Prostate gland (tissue), 2 donors: ENCODE measurements at regions of chr6 and their contacts with region 1.

Region 1: GRCh38 chr6:134021396-134022122 is 30.9 kb downstream of the SLC2A12 start:
- DNase-seq: no peak
- H3K4me3 ChIP-seq: no peak overlapping the region
- H3K27ac ChIP-seq: peak overlapping the region; percentile 77 to 78
- H3K4me1 ChIP-seq: peaks cover 11% of the 10 kb centered on the region
- H3K27me3 ChIP-seq: no peaks in the 10 kb centered on the region
- CTCF ChIP-seq: no peak
- POLR2A ChIP-seq: no peak

Region 2: GRCh38 chr6:133806382-133807140 is 215.0 kb before region 1 on chr6:
- intact Hi-C with region 1: no loop called
- DNase-seq: no peak
- H3K4me3 ChIP-seq: no peak overlapping the region
- H3K27ac ChIP-seq: no peak overlapping the region
- H3K4me1 ChIP-seq: no peaks in the 10 kb centered on the region
- H3K27me3 ChIP-seq: no peaks in the 10 kb centered on the region
- CTCF ChIP-seq: no peak
- POLR2A ChIP-seq: no peak

Region 3: GRCh38 chr6:134063966-134064445 is 42.4 kb after region 1 on chr6:
- intact Hi-C with region 1: loop called (anchors 2 kb)
- DNase-seq: peak; percentile 63
- H3K4me3 ChIP-seq: no peak overlapping the region
- H3K27ac ChIP-seq: peak overlapping the region in 1 of 2 donors; percentile 34
- H3K4me1 ChIP-seq: no peaks in the 10 kb centered on the region
- H3K27me3 ChIP-seq: no peaks in the 10 kb centered on the region
- CTCF ChIP-seq: peak; percentile 32 to 87 (median 79)
- POLR2A ChIP-seq: no peak